ENCODE measurements at regions of chr10 and their contacts with region 1.

Region 1: DNA sequence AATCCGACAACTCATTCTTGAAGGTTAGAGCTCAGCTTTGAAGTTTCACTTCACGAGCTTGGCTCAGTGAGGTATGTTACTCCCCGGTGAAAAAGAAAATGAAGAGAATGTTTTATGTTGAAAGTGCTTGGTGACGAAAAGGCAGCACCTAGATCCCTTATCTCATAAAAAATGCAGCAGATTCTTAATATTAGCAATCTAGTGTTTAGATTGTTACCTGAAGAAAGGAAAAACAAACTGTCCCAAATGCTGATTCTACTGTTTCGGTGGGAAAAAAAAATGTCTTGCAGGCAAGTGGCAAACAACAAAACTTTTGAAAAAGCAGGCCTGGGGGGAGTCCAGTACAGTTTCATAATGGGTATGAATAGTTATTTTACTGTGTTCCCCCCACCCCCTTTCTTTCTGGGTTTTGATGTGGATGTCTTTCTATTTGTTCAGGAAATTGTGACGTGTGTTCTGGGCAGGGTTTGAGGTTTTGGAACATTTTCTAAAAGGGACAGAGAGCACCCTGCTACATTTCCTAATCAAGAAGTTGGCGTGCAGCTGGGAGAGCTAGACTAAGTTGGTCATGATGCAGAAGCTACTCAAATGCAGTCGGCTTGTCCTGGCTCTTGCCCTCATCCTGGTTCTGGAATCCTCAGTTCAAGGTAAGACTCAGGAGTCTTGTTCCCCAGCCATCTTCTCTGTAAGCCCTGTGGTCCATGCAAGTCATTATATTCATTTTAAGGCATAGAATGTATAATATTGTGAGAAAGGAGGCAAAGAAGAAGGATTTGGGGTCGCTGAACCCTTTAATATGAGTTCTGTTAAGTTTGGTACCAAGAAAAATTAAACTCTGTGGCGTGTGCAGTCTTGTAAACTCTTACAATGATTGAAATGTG is at the start of gene SRGN:
- DNase-seq: peak in 4 of 5 donors; percentile 20 to 64 (median 30)
- H3K4me3 ChIP-seq: peak within 1 kb of the TSS; percentile 10
- H3K27ac ChIP-seq: peak within 1 kb of the TSS in 1 of 2 donors; percentile 11
- H3K4me1 ChIP-seq: no peaks in the 10 kb centered on the region
- H3K27me3 ChIP-seq: no peaks in the 10 kb centered on the region
- CTCF ChIP-seq: no peak
- EP300 ChIP-seq: peak; percentile 50
- POLR2A ChIP-seq: peak; percentile 30
- total RNA-seq, gene SRGN: 22.0 to 95.2 (median 36.0) TPM

Region 2: DNA sequence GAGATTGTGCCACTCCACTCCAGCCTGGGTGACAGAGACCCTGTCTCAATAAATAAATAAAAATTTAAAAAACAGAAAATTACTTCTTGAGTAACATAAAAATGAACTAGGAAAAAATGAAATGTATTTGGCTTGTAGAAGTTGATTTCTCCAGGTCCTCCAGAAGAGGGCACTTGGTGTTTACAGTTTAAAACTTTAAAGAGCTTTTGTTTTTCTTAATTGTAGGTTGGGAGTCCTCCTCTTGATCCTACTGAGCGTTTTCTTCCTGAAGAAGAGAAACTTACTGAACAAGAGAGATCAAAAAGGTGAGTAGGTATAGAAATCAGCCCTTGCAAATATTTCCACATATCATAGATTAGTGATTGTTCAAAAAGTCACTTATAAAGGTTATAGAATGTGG is 83.0 kb before region 1 on chr10:
- intact Hi-C with region 1: loop called in 2 of 4 experiments (anchors 10 kb)
- DNase-seq: no peak
- H3K4me3 ChIP-seq: no peak overlapping the region
- H3K27ac ChIP-seq: no peak overlapping the region
- H3K4me1 ChIP-seq: no peaks in the 10 kb centered on the region
- H3K27me3 ChIP-seq: no peaks in the 10 kb centered on the region
- CTCF ChIP-seq: peak in 1 of 3 donors; percentile 46
- EP300 ChIP-seq: no peak
- POLR2A ChIP-seq: no peak

Region 3: GRCh38 chr10:69130251-69130650 is 42.4 kb after region 1 on chr10:
- intact Hi-C with region 1: no loop called
- DNase-seq: no peak
- H3K4me3 ChIP-seq: no peak overlapping the region
- H3K27ac ChIP-seq: no peak overlapping the region
- H3K4me1 ChIP-seq: peaks cover under 1% of the 10 kb centered on the region
- H3K27me3 ChIP-seq: no peaks in the 10 kb centered on the region
- CTCF ChIP-seq: no peak
- EP300 ChIP-seq: no peak
- POLR2A ChIP-seq: no peak

Measured in ovary (tissue), 10 donors.